Panc1 (cell line): ENCODE measurements at regions of chr3 and their contacts with region 1.

Region 1: GRCh38 chr3:78969483-78969882 is 798.3 kb downstream of the ROBO1 start:
- DNase-seq: no peak
- ATAC-seq: no peak
- H3K4me3 ChIP-seq: no peak overlapping the region
- H3K27ac ChIP-seq: no peak overlapping the region
- H3K4me1 ChIP-seq: no peaks in the 10 kb centered on the region
- H3K27me3 ChIP-seq: no peaks in the 10 kb centered on the region
- CTCF ChIP-seq: no peak

Region 2: DNA sequence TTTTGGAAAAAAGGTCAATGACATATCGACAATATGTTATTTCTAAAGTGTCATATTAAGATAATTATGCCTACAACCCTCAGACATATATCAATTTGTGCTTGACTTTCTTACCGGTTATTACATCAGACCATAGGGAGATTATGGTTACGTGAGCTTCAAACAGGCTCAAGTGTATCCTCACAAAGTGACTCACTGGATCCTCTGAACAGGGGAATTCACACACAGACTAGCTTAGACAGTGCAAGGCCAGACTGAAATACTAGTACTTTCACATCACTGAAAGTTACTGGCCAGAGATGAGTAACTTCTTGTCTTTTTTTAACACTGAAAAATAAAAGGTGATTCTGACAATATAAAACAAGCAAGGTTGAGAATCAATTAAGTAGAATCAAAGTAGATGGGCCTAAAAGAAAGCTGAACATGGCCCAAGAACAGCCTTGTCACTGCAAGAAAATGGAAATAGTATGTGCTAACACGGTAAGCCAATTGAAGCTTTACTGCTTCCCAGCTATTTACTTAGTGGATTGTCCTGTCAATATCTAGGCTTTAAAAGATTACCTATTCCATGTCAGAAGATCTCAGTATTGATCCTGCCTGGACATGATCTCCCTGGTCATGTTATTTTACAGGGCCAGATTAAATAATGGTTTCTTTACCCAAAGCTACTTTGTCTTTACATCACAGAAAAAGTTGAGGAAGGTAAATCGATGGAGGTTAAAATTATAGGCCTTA is 50.3 kb before region 1 on chr3:
- CTCF ChIA-PET with region 1: no interaction called
- POLR2A ChIA-PET with region 1: no interaction called
- in situ Hi-C with region 1: no loop called
- intact Hi-C with region 1: loop called (anchors 10 kb)
- DNase-seq: no peak
- ATAC-seq: peak; percentile 84
- H3K4me3 ChIP-seq: no peak overlapping the region
- H3K27ac ChIP-seq: peak overlapping the region; percentile 75; the same call in 1 of the 2 replicates
- H3K4me1 ChIP-seq: peaks cover 9% of the 10 kb centered on the region
- H3K27me3 ChIP-seq: no peaks in the 10 kb centered on the region
- CTCF ChIP-seq: no peak